Common myeloid progenitor, CD34-positive (primary cell): ENCODE measurements at regions of chr15 and their contacts with region 1.

Region 1: DNA sequence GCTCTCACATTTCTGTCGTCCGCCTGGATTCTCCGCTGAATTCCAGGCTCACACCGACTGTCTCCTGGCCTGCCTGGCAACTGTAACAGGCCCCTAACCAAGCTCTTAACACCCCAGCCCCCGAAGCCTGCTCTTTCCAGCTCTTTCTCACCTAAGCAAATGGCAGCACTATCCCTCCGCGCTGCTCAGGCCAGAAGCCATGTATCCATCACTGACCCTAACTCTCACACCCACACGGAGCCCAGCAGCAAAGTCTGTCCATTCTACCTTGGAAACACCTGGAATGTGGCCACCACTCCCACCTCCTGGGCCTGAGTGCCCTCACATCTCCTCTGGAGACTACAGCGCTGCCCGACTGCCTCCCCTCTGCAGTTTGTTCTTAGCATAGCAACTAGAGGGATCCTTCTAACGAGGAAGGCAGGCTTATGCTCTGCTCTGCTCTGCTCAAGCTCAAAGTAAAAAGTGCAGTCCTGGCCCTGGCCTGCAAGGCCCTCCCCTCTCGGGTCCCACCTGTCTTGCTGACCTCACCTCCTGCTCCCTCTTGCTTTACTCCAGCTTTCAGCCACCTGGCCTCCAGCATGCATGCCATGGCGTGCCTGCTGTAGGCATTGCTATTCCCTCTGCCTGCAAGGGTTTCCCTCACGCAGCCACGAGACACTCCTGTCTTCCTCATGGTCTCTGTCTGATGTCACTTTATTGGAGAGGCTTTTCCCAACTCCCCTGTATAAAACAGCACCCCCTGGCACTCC is 27.2 kb downstream of the FEM1B start:
- DNase-seq: no peak
- H3K4me3 ChIP-seq: no peak overlapping the region
- H3K27ac ChIP-seq: no peak overlapping the region
- H3K4me1 ChIP-seq: peaks cover 0 to 11% (median 9%) of the 10 kb centered on the region in 4 experiments
- H3K27me3 ChIP-seq: no peaks in the 10 kb centered on the region

Region 2: DNA sequence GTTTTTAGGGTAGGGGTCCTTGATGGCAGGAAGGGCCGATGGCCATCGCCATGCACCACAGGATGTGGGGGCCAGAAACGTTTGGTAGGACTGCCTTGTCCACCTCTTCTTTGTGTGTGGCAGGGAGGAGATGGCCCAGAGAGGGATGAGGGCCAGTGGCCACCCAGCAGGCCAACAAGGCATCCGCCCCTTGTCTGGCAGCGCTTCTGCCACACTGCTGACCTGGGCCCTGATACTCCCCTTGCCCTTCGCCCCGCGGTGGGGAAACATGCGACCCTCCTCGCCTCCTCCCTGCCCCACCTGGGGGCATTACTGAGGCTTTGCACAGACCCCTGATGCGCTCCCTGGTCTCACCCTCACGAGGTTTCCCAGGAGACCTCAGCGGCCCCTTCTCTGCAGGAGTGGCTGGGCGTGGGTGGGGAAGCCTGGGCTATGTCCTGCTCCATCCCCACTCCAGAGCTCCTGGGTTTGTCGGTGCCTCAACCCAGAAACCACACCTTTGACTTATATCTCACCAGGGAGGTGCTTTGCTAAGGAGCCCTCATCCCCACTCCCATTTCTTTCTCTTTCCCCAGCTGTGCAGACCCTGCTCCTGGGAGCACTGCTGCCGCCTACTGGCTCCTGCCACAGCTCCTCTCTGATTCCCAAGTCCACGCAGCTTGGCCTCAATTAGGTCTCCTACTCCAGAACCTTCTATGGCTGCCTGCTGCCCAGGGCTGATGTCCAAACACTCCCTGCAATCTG is 11.5 kb after region 1 on chr15:
- CTCF ChIA-PET with region 1: interaction called, 17 read pairs
- POLR2A ChIA-PET with region 1: no interaction called
- DNase-seq: no peak
- H3K4me3 ChIP-seq: no peak overlapping the region
- H3K27ac ChIP-seq: no peak overlapping the region
- H3K4me1 ChIP-seq: peaks cover 0 to 13% (median 4%) of the 10 kb centered on the region in 4 experiments
- H3K27me3 ChIP-seq: no peaks in the 10 kb centered on the region

Region 3: DNA sequence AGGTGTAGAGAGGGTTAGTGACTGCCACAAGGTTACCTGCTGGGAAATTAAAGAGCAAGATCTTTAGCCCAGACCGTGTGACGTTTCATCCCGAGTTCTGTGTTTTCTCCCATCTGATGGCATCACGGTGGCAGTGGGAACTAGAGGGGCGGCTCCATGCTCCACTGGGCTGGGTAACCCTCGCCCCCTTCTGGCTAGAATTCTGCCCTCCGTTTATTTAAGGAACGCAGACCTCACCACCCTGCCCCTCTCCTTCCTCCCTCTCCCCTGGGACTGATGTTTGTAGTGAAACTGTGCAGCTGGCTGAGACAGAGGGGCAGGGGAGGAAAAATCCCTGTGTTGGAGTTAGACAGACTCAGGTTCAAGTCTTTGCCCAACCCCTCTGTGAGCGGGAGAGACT is 61.6 kb after region 1 on chr15:
- CTCF ChIA-PET with region 1: interaction called, 17 read pairs
- POLR2A ChIA-PET with region 1: no interaction called
- DNase-seq: peak in 2 of 3 donors; percentile 26 to 41
- H3K4me3 ChIP-seq: no peak overlapping the region
- H3K27ac ChIP-seq: no peak overlapping the region
- H3K4me1 ChIP-seq: peaks cover 0 to 30% (median 26%) of the 10 kb centered on the region in 4 experiments
- H3K27me3 ChIP-seq: no peaks in the 10 kb centered on the region

Region 4: GRCh38 chr15:68374168-68374745 is 69.5 kb after region 1 on chr15:
- CTCF ChIA-PET with region 1: interaction called, 14 read pairs
- POLR2A ChIA-PET with region 1: no interaction called
- DNase-seq: no peak
- H3K4me3 ChIP-seq: no peak overlapping the region
- H3K27ac ChIP-seq: no peak overlapping the region
- H3K4me1 ChIP-seq: peaks cover 3 to 8% (median 6%) of the 10 kb centered on the region in 4 experiments
- H3K27me3 ChIP-seq: no peaks in the 10 kb centered on the region

Region 5: GRCh38 chr15:68421115-68421551 is 116.4 kb after region 1 on chr15:
- CTCF ChIA-PET with region 1: no interaction called
- POLR2A ChIA-PET with region 1: no interaction called
- DNase-seq: no peak
- H3K4me3 ChIP-seq: no peak overlapping the region
- H3K27ac ChIP-seq: no peak overlapping the region
- H3K4me1 ChIP-seq: peaks cover 0 to 13% (median 4%) of the 10 kb centered on the region in 4 experiments
- H3K27me3 ChIP-seq: no peaks in the 10 kb centered on the region